Common myeloid progenitor, CD34-positive (primary cell): ENCODE measurements at regions of chr17 and their contacts with region 1.

Region 1: DNA sequence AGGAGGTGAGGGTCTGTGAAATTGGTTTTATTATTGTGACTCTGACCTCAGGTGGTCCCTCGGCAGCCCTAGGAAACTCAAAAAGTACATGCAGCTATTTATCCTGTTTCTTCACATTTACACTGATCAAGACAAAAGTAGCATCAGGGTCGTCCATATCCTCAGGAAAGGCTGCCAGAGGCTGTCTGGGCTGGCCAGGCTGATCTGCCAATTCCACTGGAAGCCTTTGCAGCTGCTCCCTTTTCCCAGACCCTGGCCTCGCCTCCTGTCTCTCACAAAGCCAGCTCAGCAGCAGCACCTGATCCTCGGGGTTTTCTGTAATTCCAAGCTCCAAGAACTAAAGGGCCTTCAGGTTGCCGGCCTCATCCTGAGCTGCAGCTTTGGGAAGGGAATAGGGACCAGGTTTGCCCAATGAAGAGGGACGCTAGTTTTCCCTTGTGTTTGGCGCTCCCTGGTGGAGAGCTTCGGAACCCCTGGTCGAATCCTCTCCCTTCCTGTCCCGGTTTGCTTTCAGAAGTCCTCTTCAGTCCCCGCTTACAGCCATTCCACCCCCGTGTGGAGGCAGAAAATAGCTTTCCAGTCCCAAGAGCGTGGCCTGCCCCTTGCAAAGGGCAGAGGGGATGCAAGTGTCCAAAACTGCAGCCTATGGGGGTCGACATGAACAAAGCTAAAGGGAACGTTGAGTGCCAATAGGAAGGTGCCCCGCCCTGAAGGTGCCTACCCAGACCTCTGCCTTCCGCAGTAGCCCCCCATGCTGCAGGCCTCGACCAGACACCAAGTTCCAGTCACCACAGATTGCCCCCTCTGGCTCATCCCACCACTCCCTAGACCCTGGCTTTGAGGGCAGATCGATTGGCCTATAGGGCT is 13.4 kb downstream of the MFSD6L start:
- DNase-seq: peak in 2 of 3 donors; percentile 45 to 58
- H3K4me3 ChIP-seq: peak overlapping the region in 1 of 7 experiments; percentile 23
- H3K27ac ChIP-seq: no peak overlapping the region
- H3K4me1 ChIP-seq: peaks cover 0 to 10% (median 7%) of the 10 kb centered on the region in 4 experiments
- H3K27me3 ChIP-seq: no peaks in the 10 kb centered on the region

Region 2: GRCh38 chr17:8572764-8573163 is 213.0 kb before region 1 on chr17:
- CTCF ChIA-PET with region 1: interaction called, 11 read pairs
- POLR2A ChIA-PET with region 1: no interaction called
- DNase-seq: peak; percentile 34 to 72 (median 64)
- H3K4me3 ChIP-seq: no peak overlapping the region
- H3K27ac ChIP-seq: no peak overlapping the region
- H3K4me1 ChIP-seq: no peaks in the 10 kb centered on the region
- H3K27me3 ChIP-seq: no peaks in the 10 kb centered on the region

Region 3: GRCh38 chr17:8727065-8727511 is 58.7 kb before region 1 on chr17:
- CTCF ChIA-PET with region 1: no interaction called
- POLR2A ChIA-PET with region 1: no interaction called
- DNase-seq: peak in 2 of 3 donors; percentile 55 to 59
- H3K4me3 ChIP-seq: peak overlapping the region in 2 of 7 experiments; percentile 33 to 36
- H3K27ac ChIP-seq: no peak overlapping the region
- H3K4me1 ChIP-seq: peaks cover 2 to 26% (median 19%) of the 10 kb centered on the region in 4 experiments
- H3K27me3 ChIP-seq: no peaks in the 10 kb centered on the region

Region 4: GRCh38 chr17:8745586-8746500 is 39.9 kb before region 1 on chr17:
- CTCF ChIA-PET with region 1: interaction called, 77 read pairs
- POLR2A ChIA-PET with region 1: no interaction called
- DNase-seq: peak; percentile 84 to 91 (median 89)
- H3K4me3 ChIP-seq: peak overlapping the region; percentile 37 to 85 (median 68)
- H3K27ac ChIP-seq: no peak overlapping the region
- H3K4me1 ChIP-seq: peaks cover 3 to 26% (median 13%) of the 10 kb centered on the region in 4 experiments
- H3K27me3 ChIP-seq: peaks cover 0 to 8% (median 0%) of the 10 kb centered on the region in 5 experiments

Region 5: DNA sequence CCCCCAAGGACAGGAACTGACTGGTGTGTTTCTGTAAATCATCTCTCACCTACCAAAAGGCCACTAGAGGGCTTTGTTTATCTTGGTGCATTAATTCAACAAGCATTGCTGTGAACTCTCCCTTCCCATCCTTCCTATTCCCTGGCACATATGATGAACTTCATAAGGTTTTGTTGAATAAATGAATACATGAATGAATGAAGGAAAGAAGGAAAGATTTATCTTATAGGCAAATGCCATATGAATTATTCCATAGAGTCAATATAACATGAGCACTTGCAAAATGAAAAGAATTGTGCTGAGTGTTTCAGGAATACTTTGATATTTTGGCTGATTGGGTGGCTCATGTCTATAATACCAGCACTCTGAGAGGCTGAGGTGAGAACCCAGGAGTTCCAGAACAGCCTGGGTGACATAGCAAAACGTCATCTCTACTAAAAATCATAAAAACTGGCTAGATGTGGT is 31.8 kb before region 1 on chr17:
- CTCF ChIA-PET with region 1: interaction called, 77 read pairs
- POLR2A ChIA-PET with region 1: no interaction called
- DNase-seq: peak; percentile 44 to 59 (median 55)
- H3K4me3 ChIP-seq: no peak overlapping the region
- H3K27ac ChIP-seq: no peak overlapping the region
- H3K4me1 ChIP-seq: no peaks in the 10 kb centered on the region
- H3K27me3 ChIP-seq: peaks cover 0 to 2% (median 0%) of the 10 kb centered on the region in 5 experiments

Region 6: DNA sequence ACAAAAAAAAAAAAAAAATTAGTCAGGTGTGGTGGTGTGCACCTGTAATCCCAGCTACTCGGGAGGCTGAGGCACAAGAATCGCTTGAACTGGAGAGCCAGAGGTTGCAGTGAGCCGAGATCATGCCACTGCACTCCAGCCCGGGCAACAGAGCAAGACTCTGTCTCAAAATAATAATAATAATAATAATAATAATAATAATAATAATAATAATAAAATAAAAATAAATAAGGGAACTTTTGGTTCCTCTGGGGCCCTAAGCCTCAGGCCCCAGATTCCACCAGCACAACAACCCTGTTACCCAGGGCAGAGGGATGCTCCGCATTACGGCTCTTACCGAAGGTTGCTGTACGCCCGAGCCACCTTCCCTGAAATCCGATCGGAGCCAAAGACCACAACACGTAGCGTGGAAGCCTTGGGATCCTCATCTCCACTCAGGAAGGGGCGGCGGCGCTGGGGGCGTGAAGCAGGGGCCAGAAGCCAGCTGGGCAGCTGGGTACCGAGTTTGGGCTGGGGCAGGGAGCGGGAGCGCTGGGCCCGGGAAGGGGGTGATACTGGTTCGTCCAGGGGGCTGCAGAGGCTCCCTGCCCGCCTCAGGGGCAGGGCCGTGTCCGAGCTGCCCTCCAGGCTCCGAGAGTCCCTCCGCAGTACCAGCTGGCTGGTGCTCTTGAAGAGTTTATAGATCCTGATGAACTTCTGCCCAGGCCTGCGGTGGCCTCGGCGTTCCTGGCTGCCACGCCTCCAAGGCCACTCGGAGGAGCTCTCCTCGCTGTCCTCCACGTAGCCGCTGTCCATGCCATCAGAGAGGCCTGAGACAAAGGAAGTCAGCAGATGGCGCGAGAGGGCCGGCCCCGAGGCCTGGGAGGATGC is 102.3 kb after region 1 on chr17:
- CTCF ChIA-PET with region 1: interaction called, 11 read pairs
- POLR2A ChIA-PET with region 1: no interaction called
- DNase-seq: no peak
- H3K4me3 ChIP-seq: no peak overlapping the region
- H3K27ac ChIP-seq: no peak overlapping the region
- H3K4me1 ChIP-seq: no peaks in the 10 kb centered on the region
- H3K27me3 ChIP-seq: no peaks in the 10 kb centered on the region

Region 7: GRCh38 chr17:8894673-8895578 is 109.1 kb after region 1 on chr17:
- CTCF ChIA-PET with region 1: interaction called, 11 read pairs
- POLR2A ChIA-PET with region 1: no interaction called
- DNase-seq: peak; percentile 72 to 88 (median 84)
- H3K4me3 ChIP-seq: no peak overlapping the region
- H3K27ac ChIP-seq: no peak overlapping the region
- H3K4me1 ChIP-seq: peaks cover 11 to 37% (median 23%) of the 10 kb centered on the region in 4 experiments
- H3K27me3 ChIP-seq: no peaks in the 10 kb centered on the region